Natural killer cell (primary cell): ENCODE measurements at regions of chr17 and their contacts with region 1.

Region 1: GRCh38 chr17:43170766-43171585 is at the start of gene NBR1:
- DNase-seq: peak; percentile 94 to 99
- ATAC-seq: peak; percentile 72 to 91 (median 80)
- H3K4me3 ChIP-seq: peak within 1 kb of the TSS; percentile 87
- H3K4me3 Mint-ChIP-seq: no peak within 1 kb of the TSS
- H3K27ac ChIP-seq: peak within 1 kb of the TSS; percentile 99
- H3K27ac Mint-ChIP-seq: no peak within 1 kb of the TSS
- H3K4me1 ChIP-seq: peaks cover 28% of the 10 kb centered on the region
- H3K4me1 Mint-ChIP-seq: peaks cover 20 to 25% of the 10 kb centered on the region in 2 donors
- H3K27me3 ChIP-seq: no peaks in the 10 kb centered on the region
- H3K27me3 Mint-ChIP-seq: no peaks in the 10 kb centered on the region
- CTCF ChIP-seq: no peak
- total RNA-seq, gene NBR1: 63.3 to 74.8 (median 67.0) TPM

Region 2: DNA sequence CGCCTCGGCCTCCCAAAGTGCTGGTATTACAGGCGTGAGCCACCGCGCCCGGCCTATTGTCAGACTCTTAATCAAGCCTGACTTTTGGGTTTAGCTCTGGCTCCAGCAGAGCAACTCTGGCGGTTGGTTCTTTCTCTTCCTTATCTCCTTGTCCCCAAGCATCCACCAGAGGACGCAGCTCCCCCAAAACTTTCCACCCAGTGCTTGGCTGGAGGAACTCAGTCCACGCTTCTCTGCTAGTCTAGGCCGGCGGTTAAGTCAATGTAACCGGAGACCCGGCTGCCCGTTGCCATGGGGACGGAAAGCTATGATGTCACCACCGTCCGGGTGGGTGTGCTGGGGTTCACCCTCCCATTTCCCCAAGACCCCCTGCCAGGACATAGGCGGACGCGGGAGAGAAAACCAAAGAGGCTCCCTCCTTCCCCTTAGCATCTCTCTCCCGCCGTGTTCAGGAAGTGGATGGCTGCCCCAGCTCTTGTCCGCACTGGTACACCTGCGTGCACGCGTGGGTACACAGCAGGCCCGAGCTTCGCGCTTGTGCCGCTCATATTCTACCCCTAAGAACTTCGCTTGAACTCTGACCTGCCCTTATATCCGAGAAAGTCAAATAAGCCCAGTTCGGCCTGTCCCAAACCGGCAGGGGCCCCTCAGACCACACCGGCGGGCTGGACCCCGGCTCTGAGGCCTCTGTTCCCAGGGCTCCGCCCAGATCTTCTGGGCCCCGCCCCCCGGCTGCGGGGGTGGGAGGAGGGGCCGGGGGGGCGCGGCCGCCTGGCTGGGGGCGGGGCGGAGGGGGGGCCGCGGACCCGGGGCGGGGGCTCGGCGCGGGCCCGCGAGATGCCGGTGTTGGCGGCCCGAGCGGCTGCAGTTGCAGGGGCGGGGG is 146.3 kb before region 1 on chr17 and contains the start of gene RND2:
- intact Hi-C with region 1: loop called (anchors 5 kb)
- DNase-seq: peak; percentile 75 to 89
- ATAC-seq: peak; percentile 68 to 77 (median 72)
- H3K4me3 ChIP-seq: peak within 1 kb of the TSS; percentile 63
- H3K4me3 Mint-ChIP-seq: peak within 1 kb of the TSS; percentile 95
- H3K27ac ChIP-seq: peak within 1 kb of the TSS; percentile 59
- H3K27ac Mint-ChIP-seq: peak within 1 kb of the TSS; percentile 81 to 95
- H3K4me1 ChIP-seq: peaks cover 34% of the 10 kb centered on the region
- H3K4me1 Mint-ChIP-seq: peaks cover 10 to 32% of the 10 kb centered on the region in 2 donors
- H3K27me3 ChIP-seq: no peaks in the 10 kb centered on the region
- H3K27me3 Mint-ChIP-seq: no peaks in the 10 kb centered on the region
- CTCF ChIP-seq: peak; percentile 49
- total RNA-seq, gene RND2: 0.12 to 0.58 (median 0.14) TPM

Region 3: GRCh38 chr17:43114151-43114552 is 56.8 kb before region 1 on chr17:
- intact Hi-C with region 1: no loop called
- DNase-seq: no peak
- ATAC-seq: no peak
- H3K4me3 ChIP-seq: no peak overlapping the region
- H3K4me3 Mint-ChIP-seq: no peak overlapping the region
- H3K27ac ChIP-seq: no peak overlapping the region
- H3K27ac Mint-ChIP-seq: no peak overlapping the region
- H3K4me1 ChIP-seq: no peaks in the 10 kb centered on the region
- H3K4me1 Mint-ChIP-seq: no peaks in the 10 kb centered on the region
- H3K27me3 ChIP-seq: no peaks in the 10 kb centered on the region
- H3K27me3 Mint-ChIP-seq: no peaks in the 10 kb centered on the region
- CTCF ChIP-seq: no peak

Region 4: GRCh38 chr17:43125133-43125966 is 45.6 kb before region 1 on chr17 and contains the start of gene BRCA1:
- intact Hi-C with region 1: loop called (anchors 1 kb)
- DNase-seq: peak; percentile 89 to 98
- ATAC-seq: peak; percentile 99 to 100 (median 99)
- H3K4me3 ChIP-seq: peak within 1 kb of the TSS; percentile 55
- H3K4me3 Mint-ChIP-seq: peak within 1 kb of the TSS; percentile 100
- H3K27ac ChIP-seq: peak within 1 kb of the TSS; percentile 67
- H3K27ac Mint-ChIP-seq: peak within 1 kb of the TSS; percentile 98
- H3K4me1 ChIP-seq: peaks cover 19% of the 10 kb centered on the region
- H3K4me1 Mint-ChIP-seq: peaks cover 20 to 29% of the 10 kb centered on the region in 2 donors
- H3K27me3 ChIP-seq: no peaks in the 10 kb centered on the region
- H3K27me3 Mint-ChIP-seq: no peaks in the 10 kb centered on the region
- CTCF ChIP-seq: no peak
- total RNA-seq, gene BRCA1: 5.7 to 9.9 (median 8.6) TPM

Region 5: DNA sequence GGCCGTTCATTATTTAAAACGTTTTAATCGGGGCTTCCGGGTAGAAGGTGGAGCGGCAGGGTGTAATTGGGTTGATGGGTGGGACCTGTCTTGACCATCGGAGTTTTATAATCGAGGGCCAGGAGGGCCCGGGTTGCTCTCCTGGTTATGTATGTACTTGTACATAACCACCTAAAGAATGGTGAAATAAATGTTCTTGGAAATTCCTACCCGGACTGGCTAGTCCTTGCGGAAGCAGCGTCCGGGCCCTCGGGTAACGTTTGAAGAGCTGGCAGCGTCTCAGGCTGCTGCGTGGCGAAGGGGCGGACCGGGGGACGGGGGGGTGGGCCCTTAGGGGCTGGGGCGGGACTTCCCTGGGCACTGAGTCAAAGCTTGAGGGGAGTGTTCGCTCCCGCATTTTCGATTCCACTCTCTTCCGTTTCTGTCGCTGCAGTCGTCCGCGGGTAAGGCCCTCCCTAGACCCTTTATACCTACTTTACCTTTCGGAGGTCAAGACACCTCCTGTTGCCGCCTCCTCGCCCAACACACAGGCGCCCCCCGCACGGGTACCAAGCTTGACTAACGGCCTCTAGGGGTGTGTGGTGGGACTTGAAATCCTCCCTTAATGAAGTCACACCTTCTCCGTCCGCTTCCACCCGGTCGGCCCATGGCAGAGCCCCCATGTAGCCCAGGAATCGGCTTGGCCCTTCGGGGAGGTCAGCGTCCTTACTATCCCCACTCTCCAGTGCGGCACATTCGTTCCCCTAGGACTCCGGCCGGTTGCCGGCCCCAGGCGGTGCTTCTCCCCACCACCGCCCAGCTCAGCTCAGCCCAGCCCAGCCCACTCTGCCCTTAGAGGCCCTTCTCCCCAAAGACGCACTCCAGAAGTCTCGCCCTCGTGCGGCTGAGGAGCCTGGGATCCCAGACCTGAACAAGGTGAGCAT is 40.8 kb after region 1 on chr17 and contains the start of gene TMEM106A:
- intact Hi-C with region 1: loop called (anchors 5 kb)
- DNase-seq: peak; percentile 72 to 88
- ATAC-seq: peak; percentile 91 to 93 (median 91)
- H3K4me3 ChIP-seq: peak within 1 kb of the TSS; percentile 72
- H3K4me3 Mint-ChIP-seq: peak within 1 kb of the TSS; percentile 96
- H3K27ac ChIP-seq: peak within 1 kb of the TSS; percentile 86
- H3K27ac Mint-ChIP-seq: peak within 1 kb of the TSS; percentile 95 to 97
- H3K4me1 ChIP-seq: peaks cover 21% of the 10 kb centered on the region
- H3K4me1 Mint-ChIP-seq: peaks cover 22 to 34% of the 10 kb centered on the region in 2 donors
- H3K27me3 ChIP-seq: no peaks in the 10 kb centered on the region
- H3K27me3 Mint-ChIP-seq: no peaks in the 10 kb centered on the region
- CTCF ChIP-seq: peak; percentile 52
- total RNA-seq, gene TMEM106A: 22.0 to 27.4 (median 22.4) TPM

Region 6: DNA sequence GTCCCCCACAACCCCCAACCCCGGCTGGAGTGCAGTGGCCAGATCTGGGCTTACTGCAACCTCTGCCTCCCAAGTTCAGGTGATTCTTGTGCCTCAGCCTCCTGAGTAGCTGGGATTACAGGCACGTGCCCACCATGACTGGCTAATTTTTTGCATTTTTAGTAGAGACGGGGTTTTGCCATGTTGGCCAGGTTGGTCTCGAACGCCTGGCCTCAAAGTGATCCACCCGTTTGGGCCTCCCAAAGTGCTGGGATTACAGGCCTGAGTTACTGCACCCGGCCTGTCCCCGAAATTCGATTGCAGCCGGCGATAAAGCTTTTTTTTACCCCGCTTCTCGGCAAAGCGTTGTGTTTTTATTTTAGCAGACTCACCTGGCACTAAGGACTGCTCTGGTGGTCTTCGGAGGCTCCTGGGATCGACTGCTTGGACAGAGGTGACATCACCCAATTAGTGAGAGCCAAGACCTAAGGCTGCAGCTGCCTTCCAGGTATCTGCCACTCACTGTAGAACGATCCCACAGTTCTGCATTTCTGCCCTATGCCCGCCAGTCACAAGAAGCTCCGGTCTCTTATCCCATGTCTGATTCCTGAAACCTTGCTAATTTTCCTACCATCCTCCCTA is 145.7 kb after region 1 on chr17:
- intact Hi-C with region 1: loop called (anchors 10 kb)
- DNase-seq: peak in 1 of 2 donors; percentile 49
- ATAC-seq: no peak
- H3K4me3 ChIP-seq: no peak overlapping the region
- H3K4me3 Mint-ChIP-seq: peak overlapping the region; percentile 28
- H3K27ac ChIP-seq: no peak overlapping the region
- H3K27ac Mint-ChIP-seq: no peak overlapping the region
- H3K4me1 ChIP-seq: no peaks in the 10 kb centered on the region
- H3K4me1 Mint-ChIP-seq: peaks cover 0 to 13% of the 10 kb centered on the region in 2 donors
- H3K27me3 ChIP-seq: no peaks in the 10 kb centered on the region
- H3K27me3 Mint-ChIP-seq: no peaks in the 10 kb centered on the region
- CTCF ChIP-seq: no peak

Region 7: GRCh38 chr17:43367737-43368242 is 196.8 kb after region 1 on chr17:
- intact Hi-C with region 1: loop called (anchors 1 kb)
- DNase-seq: peak in 1 of 2 donors; percentile 82
- ATAC-seq: peak; percentile 44 to 64 (median 62)
- H3K4me3 ChIP-seq: peak overlapping the region; percentile 57
- H3K4me3 Mint-ChIP-seq: peak overlapping the region; percentile 87
- H3K27ac ChIP-seq: peak overlapping the region; percentile 99
- H3K27ac Mint-ChIP-seq: peak overlapping the region; percentile 97 to 100
- H3K4me1 ChIP-seq: peaks cover 38% of the 10 kb centered on the region
- H3K4me1 Mint-ChIP-seq: peaks cover 27 to 29% of the 10 kb centered on the region in 2 donors
- H3K27me3 ChIP-seq: no peaks in the 10 kb centered on the region
- H3K27me3 Mint-ChIP-seq: no peaks in the 10 kb centered on the region
- CTCF ChIP-seq: no peak